ENCODE measurements at regions of chrX and their contacts with region 1.

Region 1: GRCh38 chrX:16870095-16870860 is at the start of gene RBBP7:
- DNase-seq: peak; percentile 88
- H3K4me3 Mint-ChIP-seq: peak within 1 kb of the TSS; percentile 97
- H3K27ac Mint-ChIP-seq: peak within 1 kb of the TSS; percentile 96
- H3K4me1 Mint-ChIP-seq: peaks cover 20% of the 10 kb centered on the region
- H3K27me3 Mint-ChIP-seq: peaks cover 8% of the 10 kb centered on the region
- total RNA-seq, gene RBBP7: 127 and 134 TPM in 2 replicates

Region 2: GRCh38 chrX:16719334-16720084 is 150.8 kb before region 1 on chrX and contains the start of gene SYAP1:
- intact Hi-C with region 1: loop called (anchors 2 kb)
- DNase-seq: peak; percentile 89
- H3K4me3 Mint-ChIP-seq: peak within 1 kb of the TSS; percentile 92
- H3K27ac Mint-ChIP-seq: peak within 1 kb of the TSS; percentile 94
- H3K4me1 Mint-ChIP-seq: peaks cover 16% of the 10 kb centered on the region
- H3K27me3 Mint-ChIP-seq: no peaks in the 10 kb centered on the region
- total RNA-seq, gene SYAP1: 19.5 and 19.7 TPM in 2 replicates

Region 3: GRCh38 chrX:16826207-16826606 is 44.1 kb before region 1 on chrX:
- intact Hi-C with region 1: loop called (anchors 1 kb)
- DNase-seq: no peak
- H3K4me3 Mint-ChIP-seq: no peak overlapping the region
- H3K27ac Mint-ChIP-seq: peak overlapping the region; percentile 58
- H3K4me1 Mint-ChIP-seq: peaks cover 16% of the 10 kb centered on the region
- H3K27me3 Mint-ChIP-seq: no peaks in the 10 kb centered on the region

Region 4: DNA sequence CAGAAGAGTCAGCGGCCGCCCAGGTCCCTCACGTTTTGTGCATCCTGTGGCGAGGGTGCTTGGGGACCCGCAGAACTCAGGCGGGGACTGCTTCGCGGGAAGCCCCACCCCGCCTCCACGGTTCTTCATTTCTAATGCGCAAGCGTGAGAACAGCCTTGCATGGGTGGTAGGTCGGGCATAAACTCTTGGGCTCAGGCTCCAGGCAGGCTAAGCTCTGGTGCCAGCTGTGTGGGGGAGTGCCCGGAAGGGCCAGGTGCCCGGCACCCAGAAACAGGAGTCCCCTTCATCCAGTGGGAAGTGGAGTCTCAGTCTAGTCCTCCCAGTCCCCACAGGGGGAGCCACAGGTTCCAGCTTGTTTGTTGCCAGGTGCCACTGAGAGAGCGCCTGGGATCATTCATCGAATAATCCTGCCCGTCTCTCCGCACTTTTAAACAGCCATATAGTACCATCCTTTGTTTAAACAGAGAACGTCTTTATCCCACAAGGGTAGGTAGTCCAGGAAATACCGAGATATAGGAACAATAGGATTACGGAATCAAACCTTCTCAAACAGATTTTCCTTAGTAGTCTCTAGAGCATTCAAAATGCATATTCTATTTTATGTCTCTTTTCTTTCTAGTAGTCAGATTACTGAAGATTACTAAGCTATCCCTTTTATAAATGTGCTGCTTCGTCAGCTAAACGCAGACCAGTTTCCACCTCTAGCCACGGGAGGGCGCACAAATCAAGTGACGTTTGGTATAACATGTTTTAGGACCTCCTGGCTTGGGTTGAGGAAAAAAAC is 12.6 kb after region 1 on chrX:
- intact Hi-C with region 1: loop called (anchors 1 kb)
- DNase-seq: peak; percentile 31
- H3K4me3 Mint-ChIP-seq: peak overlapping the region; percentile 75
- H3K27ac Mint-ChIP-seq: no peak overlapping the region
- H3K4me1 Mint-ChIP-seq: peaks cover 6% of the 10 kb centered on the region
- H3K27me3 Mint-ChIP-seq: peaks cover 18% of the 10 kb centered on the region

Region 5: DNA sequence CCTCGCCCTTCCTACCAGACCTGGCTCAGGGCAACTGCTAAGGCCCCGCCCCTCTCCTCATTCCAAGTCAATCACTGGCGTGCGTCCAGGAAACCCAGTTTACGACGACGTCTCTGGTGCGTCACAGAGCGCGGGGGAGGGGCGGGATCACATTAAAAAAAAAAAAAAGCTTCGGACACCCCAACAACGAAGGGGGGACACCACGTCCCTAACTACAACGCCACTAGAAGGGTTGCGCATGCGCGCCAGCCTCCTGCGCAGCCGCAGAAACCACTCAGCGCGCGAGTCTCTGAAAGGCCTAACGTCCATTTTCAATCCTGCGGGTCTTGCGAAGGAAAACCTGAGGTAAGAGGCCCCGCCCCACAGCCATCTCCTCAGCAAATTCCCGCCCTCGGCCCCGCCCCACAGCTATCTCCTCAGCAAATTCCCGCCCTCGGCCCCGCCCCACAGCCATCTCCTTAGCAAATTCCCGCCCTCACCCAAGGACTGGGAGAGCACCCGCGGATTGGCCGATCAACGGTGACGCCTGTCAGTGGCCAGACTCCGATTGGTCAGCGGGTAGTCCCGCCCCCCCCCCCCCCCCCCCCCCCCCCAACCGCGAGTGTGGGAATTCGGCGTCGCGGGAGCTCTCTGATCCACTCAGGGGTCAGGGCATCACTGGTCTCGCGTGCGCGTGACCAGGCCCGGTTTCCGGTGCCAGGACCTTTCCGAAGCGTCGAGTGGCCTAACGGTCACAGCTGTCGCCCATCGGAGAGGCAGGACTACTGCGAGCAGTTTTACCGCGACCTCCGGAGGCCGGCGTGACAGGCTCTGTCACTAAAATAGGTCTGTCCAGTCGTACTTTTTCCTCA is 866.8 kb after region 1 on chrX and contains the start of gene SCML1:
- intact Hi-C with region 1: loop called (anchors 5 kb)
- DNase-seq: peak; percentile 75
- H3K4me3 Mint-ChIP-seq: peak within 1 kb of the TSS; percentile 80
- H3K27ac Mint-ChIP-seq: peak within 1 kb of the TSS; percentile 79
- H3K4me1 Mint-ChIP-seq: peaks cover 20% of the 10 kb centered on the region
- H3K27me3 Mint-ChIP-seq: peaks cover 34% of the 10 kb centered on the region
- total RNA-seq, gene SCML1: 1.1 and 1.4 TPM in 2 replicates

Measured in activated T-helper 1 cell treated with anti-CD3 and anti-CD28 coated beads, Interleukin-12 subunit alpha, Interleukin-12 subunit beta, Interleukin-2, Interleukin-4 antibody, amounts not matched to agents 30 ng/mL and 10 ng/mL and 1 ng/mL, durations not matched to agents 14 hours and 24 hours and 36 hours (primary cell).